CD4-positive, alpha-beta memory T cell (primary cell): ENCODE measurements at regions of chr17 and their contacts with region 1.

Region 1: DNA sequence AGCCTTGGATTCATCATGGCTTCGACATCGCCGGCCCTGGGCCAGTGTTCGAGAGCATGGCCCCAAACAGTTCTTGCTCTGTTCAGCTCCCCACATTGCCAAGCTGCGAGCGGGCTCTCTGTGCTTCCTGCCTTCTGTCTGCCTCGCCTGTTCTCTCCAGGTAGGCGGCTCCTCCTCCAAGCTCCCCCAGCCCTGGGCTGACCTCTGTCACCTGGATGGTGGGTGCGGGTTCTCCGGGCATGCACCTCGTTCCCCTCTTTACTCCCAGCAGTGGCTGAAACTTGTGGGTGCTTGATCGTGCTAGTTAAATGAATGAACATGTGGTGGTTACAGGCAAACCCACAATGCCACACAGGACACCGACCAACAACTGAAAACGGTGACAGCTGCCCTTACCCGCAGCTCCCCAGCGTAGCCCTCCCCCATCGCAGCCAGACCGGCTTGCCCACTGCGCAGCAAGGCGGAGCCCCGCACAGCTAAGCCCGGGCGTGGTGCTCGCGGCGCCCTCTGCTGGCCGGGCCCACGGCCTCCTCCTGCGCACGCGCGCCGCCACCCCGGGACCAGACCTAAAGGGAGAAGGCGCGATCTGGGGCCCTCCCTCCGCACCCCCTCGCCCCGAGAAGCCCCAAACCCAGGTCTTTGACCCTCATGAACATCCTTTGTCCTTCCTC is 23.0 kb upstream of the EIF1 start:
- DNase-seq: peak; percentile 84 to 92 (median 88)
- H3K4me3 ChIP-seq: peak overlapping the region; percentile 69 to 71
- H3K4me3 Mint-ChIP-seq: peak overlapping the region; percentile 82 to 97 (median 92)
- H3K27ac ChIP-seq: peak overlapping the region; percentile 96
- H3K27ac Mint-ChIP-seq: peak overlapping the region; percentile 94 to 100 (median 98)
- H3K4me1 ChIP-seq: peaks cover 22% of the 10 kb centered on the region
- H3K4me1 Mint-ChIP-seq: peaks cover 13 to 35% (median 21%) of the 10 kb centered on the region in 4 donors
- H3K27me3 ChIP-seq: no peaks in the 10 kb centered on the region
- H3K27me3 Mint-ChIP-seq: peaks cover 0 to under 1% of the 10 kb centered on the region in 2 donors

Region 2: GRCh38 chr17:40803617-40804082 is 862.1 kb before region 1 on chr17:
- CTCF ChIA-PET with region 1: interaction called, 25 read pairs
- POLR2A ChIA-PET with region 1: interaction called, 4 read pairs
- intact Hi-C with region 1: loop called (anchors 1 kb)
- DNase-seq: peak; percentile 59 to 75 (median 62)
- H3K4me3 ChIP-seq: no peak overlapping the region
- H3K4me3 Mint-ChIP-seq: no peak overlapping the region
- H3K27ac ChIP-seq: no peak overlapping the region
- H3K27ac Mint-ChIP-seq: no peak overlapping the region
- H3K4me1 ChIP-seq: peaks cover 4% of the 10 kb centered on the region
- H3K4me1 Mint-ChIP-seq: peaks cover 2 to 4% (median 3%) of the 10 kb centered on the region in 4 donors
- H3K27me3 ChIP-seq: peaks cover 11% of the 10 kb centered on the region
- H3K27me3 Mint-ChIP-seq: peaks cover 19 to 34% of the 10 kb centered on the region in 2 donors

Region 3: DNA sequence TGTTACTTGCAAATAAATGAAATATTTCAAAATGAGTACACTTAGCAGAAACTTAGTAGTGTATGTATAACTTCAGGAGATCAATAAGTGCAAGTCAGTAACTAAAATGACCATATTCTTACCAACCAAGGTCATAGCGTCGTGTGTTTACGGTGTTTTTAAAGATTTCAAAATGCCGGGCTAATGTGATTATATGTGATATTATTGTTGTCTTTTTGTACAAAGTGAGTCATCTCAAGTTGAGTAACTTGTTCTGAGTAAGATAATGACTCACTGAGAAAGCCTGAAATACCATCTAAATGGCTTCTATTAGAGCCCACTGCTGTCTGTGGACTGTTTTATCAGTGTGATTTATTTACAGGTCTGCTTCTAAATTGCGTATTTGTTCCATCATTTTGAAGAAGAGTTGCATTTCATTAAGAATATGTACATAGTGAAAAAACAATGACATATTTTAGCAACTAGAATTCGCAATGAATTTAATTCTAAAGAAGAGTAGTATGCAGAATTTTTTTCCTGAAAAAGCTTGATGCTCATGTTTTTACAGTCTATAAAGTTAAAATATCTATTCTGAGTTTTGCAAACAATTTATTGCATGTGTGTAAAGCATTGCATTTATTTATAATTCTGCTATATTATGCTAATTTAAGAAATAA is 811.4 kb before region 1 on chr17:
- CTCF ChIA-PET with region 1: interaction called, 136 read pairs
- POLR2A ChIA-PET with region 1: interaction called, 5 read pairs
- intact Hi-C with region 1: loop called (anchors 1 kb)
- DNase-seq: no peak
- H3K4me3 ChIP-seq: no peak overlapping the region
- H3K4me3 Mint-ChIP-seq: no peak overlapping the region
- H3K27ac ChIP-seq: no peak overlapping the region
- H3K27ac Mint-ChIP-seq: no peak overlapping the region
- H3K4me1 ChIP-seq: no peaks in the 10 kb centered on the region
- H3K4me1 Mint-ChIP-seq: peaks cover 0 to 4% (median 2%) of the 10 kb centered on the region in 4 donors
- H3K27me3 ChIP-seq: no peaks in the 10 kb centered on the region
- H3K27me3 Mint-ChIP-seq: peaks cover 8 to 10% of the 10 kb centered on the region in 2 donors

Region 4: DNA sequence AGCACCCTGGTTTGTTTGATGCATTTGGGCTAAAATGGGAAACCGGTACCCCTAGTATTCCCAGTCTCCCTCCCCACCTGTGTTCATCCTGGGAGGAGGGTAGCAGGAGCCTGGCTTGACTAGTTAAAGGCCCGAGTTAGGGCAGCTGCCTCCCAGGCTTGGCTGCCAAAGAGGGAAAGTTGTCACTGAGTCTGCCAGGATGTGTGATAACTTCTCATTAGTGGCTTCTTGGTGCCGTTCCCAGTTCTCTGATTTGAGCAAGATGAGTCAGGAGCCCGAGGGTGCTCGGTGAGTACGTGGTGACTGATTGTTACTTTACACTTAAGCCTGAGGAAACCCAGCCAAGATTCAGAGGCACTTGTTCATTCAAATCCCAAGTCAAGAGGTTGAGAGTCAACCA is 201.0 kb before region 1 on chr17:
- CTCF ChIA-PET with region 1: no interaction called
- POLR2A ChIA-PET with region 1: no interaction called
- intact Hi-C with region 1: no loop called
- DNase-seq: no peak
- H3K4me3 ChIP-seq: no peak overlapping the region
- H3K4me3 Mint-ChIP-seq: no peak overlapping the region
- H3K27ac ChIP-seq: no peak overlapping the region
- H3K27ac Mint-ChIP-seq: peak overlapping the region in 1 of 7 donors; percentile 56
- H3K4me1 ChIP-seq: no peaks in the 10 kb centered on the region
- H3K4me1 Mint-ChIP-seq: no peaks in the 10 kb centered on the region
- H3K27me3 ChIP-seq: no peaks in the 10 kb centered on the region
- H3K27me3 Mint-ChIP-seq: no peaks in the 10 kb centered on the region

Region 5: GRCh38 chr17:41648411-41649195 is 17.1 kb before region 1 on chr17:
- CTCF ChIA-PET with region 1: interaction called, 394 read pairs
- POLR2A ChIA-PET with region 1: interaction called, 49 read pairs
- intact Hi-C with region 1: loop called (anchors 1 kb)
- DNase-seq: peak; percentile 75 to 84 (median 81)
- H3K4me3 ChIP-seq: peak overlapping the region; percentile 50 to 76
- H3K4me3 Mint-ChIP-seq: peak overlapping the region; percentile 74 to 91 (median 82)
- H3K27ac ChIP-seq: peak overlapping the region; percentile 49
- H3K27ac Mint-ChIP-seq: peak overlapping the region in 6 of 7 donors; percentile 64 to 92 (median 86)
- H3K4me1 ChIP-seq: peaks cover 13% of the 10 kb centered on the region
- H3K4me1 Mint-ChIP-seq: peaks cover 2 to 11% (median 8%) of the 10 kb centered on the region in 4 donors
- H3K27me3 ChIP-seq: no peaks in the 10 kb centered on the region
- H3K27me3 Mint-ChIP-seq: peaks cover 0 to 2% of the 10 kb centered on the region in 2 donors

Region 6: GRCh38 chr17:41695954-41696756 is 30.5 kb after region 1 on chr17:
- CTCF ChIA-PET with region 1: interaction called, 116 read pairs
- POLR2A ChIA-PET with region 1: interaction called, 285 read pairs
- intact Hi-C with region 1: no loop called
- DNase-seq: peak; percentile 76 to 83 (median 76)
- H3K4me3 ChIP-seq: no peak overlapping the region
- H3K4me3 Mint-ChIP-seq: peak overlapping the region in 2 of 8 donors; percentile 45 to 46
- H3K27ac ChIP-seq: no peak overlapping the region
- H3K27ac Mint-ChIP-seq: peak overlapping the region; percentile 34 to 85 (median 70)
- H3K4me1 ChIP-seq: peaks cover 15% of the 10 kb centered on the region
- H3K4me1 Mint-ChIP-seq: peaks cover 13 to 37% (median 23%) of the 10 kb centered on the region in 4 donors
- H3K27me3 ChIP-seq: no peaks in the 10 kb centered on the region
- H3K27me3 Mint-ChIP-seq: peaks cover 0 to 2% of the 10 kb centered on the region in 2 donors